ENCODE measurements at regions of chr1 and their contacts with region 1.

Region 1: DNA sequence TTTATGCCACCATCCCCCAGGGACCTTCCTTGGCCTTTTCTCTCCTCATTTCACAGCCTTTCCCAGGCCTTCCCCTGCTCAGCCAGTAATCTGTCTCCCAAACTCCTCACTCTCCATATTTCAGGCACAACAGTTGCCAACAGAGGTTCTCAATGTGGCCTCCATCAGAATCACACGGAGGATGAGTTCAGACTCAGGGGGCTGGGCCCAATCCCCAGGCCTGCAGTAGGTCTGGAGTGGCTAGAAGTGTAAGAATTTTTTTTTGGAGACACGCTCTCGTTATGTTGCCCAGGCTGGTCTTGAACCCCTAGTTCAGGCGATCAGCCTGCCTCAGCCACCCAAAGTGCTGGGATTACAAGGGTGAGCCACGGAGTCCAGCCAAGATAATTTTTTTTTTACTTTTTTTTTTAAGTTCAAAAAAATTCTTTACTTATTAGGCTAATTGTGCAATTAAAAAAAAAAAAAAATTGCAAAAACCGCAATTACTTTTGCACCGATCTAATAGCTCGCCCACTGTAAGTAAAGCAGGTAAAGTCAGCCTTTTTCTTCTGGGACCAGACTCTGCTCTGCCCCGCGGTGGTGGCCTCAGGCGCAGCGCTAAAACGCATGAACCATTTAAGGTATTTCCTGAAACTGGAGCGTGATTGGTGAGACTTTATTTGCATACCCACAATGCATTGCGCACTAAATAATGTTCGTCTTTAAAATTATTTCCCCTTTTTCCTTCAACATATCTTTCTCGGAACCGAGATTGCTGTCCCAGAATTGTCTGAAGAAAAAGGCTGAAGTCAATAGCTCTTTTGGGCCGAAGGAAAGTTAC is 18.7 kb downstream of the KIAA2013 start:
- DNase-seq: peak; percentile 98
- H3K4me3 Mint-ChIP-seq: peak overlapping the region; percentile 88
- H3K27ac Mint-ChIP-seq: peak overlapping the region; percentile 100
- H3K4me1 Mint-ChIP-seq: peaks cover 38% of the 10 kb centered on the region
- H3K27me3 Mint-ChIP-seq: peaks cover 29% of the 10 kb centered on the region

Region 2: DNA sequence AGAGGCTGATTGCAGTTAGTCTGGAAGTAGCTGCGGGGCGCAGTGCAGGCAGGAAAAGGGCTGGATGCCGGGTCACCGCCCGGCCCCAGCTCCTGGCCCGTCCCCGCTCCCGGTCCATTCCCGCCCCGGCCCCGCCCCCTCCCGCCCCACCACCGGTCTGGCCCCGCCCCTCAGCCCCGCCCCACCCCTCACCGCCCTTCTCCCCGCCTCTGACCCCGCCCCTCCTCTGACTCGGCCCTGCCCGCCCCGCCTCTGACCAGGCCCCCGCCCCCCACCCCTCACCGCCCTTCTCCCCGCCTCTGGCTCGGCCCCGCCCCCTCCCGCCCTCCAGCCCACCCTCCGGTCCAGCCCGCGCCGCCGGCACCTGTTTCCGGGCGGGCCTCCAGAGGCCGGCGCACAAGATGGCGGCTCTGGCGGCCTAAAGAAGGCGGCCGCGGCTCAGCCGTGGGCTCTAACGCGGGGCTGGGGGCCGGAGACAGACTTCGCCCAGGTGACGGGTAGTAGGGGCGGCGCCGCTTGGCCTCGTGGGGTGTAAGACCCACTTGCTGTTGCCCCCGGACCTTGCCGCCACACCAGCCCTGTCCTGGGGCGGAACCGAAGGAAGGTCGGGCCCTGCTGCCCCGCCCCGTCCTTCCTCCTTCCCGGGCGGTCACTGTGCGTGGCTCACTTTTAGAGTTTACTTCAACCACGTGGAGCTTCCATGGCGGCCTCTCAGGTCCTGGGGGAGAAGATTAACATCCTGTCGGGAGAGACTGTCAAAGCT is 634.5 kb before region 1 on chr1 and contains the start of gene UBIAD1:
- intact Hi-C with region 1: loop called (anchors 10 kb)
- DNase-seq: peak; percentile 93
- H3K4me3 Mint-ChIP-seq: peak within 1 kb of the TSS; percentile 91
- H3K27ac Mint-ChIP-seq: peak within 1 kb of the TSS; percentile 89
- H3K4me1 Mint-ChIP-seq: peaks cover 24% of the 10 kb centered on the region
- H3K27me3 Mint-ChIP-seq: peaks cover 2% of the 10 kb centered on the region
- total RNA-seq, gene UBIAD1: 32.4 and 32.5 TPM in 2 replicates

Region 3: DNA sequence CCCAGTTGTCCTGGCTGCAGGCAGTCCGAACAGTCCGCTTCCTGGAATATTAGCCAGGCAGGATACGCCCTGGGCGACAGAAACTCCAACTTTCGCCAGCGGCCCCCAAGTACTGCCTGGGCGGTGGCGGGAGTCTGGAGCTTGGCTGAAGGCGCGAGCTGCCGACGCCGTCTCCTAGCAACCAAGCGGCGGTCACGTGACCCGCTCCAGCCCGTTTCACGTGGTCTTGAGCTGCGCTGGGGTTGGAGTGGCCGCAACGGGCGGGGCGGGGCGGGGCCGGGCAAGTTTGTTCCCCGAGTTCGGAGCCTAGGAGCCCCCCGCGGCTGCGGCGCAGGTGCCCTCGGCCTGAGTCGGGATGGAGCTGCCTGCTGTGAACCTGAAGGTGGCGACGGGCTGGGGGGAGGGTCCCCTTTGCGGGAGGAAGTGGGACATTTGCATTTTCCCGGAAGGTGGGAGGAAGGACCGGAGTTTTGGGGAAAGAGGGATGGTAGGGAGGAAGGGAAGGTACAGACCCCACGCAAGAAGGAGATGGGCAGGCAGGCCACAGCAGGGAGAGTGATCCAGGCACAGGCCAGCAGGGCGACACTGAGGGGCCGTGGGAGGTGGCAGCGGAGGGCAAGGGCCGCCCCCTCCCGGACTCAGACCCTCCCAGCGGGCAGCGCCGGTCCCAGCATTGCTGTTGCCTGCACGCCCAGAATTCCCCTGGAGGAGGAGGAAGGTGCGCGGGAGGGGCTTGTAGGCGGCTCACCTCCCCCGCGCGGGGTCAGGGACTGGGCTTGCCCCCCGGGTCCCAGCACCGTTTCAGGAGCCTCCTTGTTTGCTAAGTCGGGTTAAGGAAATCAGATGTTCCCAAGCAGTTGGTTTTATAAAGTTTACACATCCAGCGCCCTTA is 171.4 kb before region 1 on chr1 and contains the start of gene AGTRAP:
- intact Hi-C with region 1: loop called (anchors 5 kb)
- DNase-seq: peak; percentile 96
- H3K4me3 Mint-ChIP-seq: peak within 1 kb of the TSS; percentile 98
- H3K27ac Mint-ChIP-seq: peak within 1 kb of the TSS; percentile 93
- H3K4me1 Mint-ChIP-seq: peaks cover 54% of the 10 kb centered on the region
- H3K27me3 Mint-ChIP-seq: no peaks in the 10 kb centered on the region
- total RNA-seq, gene AGTRAP: 13.1 and 14.0 TPM in 2 replicates

Region 4: DNA sequence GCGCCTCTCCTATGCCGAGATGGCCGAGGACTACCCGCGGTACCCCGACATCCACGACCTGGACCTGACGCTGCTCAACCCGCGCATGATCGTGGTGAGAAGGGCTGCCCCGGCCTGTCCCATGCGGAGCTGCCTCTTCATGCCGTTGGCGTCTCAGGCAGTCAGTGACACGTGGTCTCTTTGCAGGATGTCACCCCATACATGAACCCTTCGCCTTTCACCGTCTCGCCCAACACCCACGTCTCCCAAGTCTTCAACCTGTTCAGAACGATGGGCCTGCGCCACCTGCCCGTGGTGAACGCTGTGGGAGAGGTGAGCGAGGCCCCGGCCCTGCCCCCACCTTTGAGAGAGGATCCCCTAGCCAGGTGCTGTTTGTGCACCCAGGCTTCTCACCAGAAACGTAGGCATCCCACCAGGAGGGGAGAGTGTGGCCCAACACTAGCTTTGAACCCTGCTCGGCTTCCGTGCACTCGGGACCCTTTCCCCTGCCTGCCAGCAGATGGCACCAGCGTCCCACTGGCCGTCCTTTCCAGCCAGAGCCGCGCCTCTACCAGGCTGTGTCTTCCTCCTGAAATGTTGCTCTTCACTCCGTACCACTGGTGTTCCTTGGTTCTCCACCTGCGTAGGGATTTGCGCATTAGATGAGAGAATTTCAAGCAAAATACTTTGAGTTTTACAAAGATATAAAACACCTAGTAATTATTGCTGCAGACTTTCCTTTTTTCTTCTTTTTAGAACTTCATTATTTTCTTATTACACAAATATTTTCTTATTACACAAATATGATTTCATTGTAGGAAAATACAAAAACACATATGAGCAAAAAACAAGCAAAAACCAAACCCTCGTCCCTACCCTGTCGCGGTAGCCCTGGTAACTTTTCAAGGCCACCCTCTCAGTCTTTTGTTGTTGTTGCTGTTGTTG is 68.9 kb before region 1 on chr1:
- intact Hi-C with region 1: loop called (anchors 1 kb)
- DNase-seq: peak; percentile 93
- H3K4me3 Mint-ChIP-seq: no peak overlapping the region
- H3K27ac Mint-ChIP-seq: no peak overlapping the region
- H3K4me1 Mint-ChIP-seq: peaks cover 5% of the 10 kb centered on the region
- H3K27me3 Mint-ChIP-seq: no peaks in the 10 kb centered on the region

Region 5: GRCh38 chr1:11934302-11935056 is 27.0 kb after region 1 on chr1 and contains the start of gene PLOD1:
- intact Hi-C with region 1: loop called (anchors 2 kb)
- DNase-seq: peak; percentile 94
- H3K4me3 Mint-ChIP-seq: peak within 1 kb of the TSS; percentile 86
- H3K27ac Mint-ChIP-seq: peak within 1 kb of the TSS; percentile 50
- H3K4me1 Mint-ChIP-seq: peaks cover 8% of the 10 kb centered on the region
- H3K27me3 Mint-ChIP-seq: no peaks in the 10 kb centered on the region
- total RNA-seq, gene PLOD1: 40.3 and 40.6 TPM in 2 replicates

Region 6: DNA sequence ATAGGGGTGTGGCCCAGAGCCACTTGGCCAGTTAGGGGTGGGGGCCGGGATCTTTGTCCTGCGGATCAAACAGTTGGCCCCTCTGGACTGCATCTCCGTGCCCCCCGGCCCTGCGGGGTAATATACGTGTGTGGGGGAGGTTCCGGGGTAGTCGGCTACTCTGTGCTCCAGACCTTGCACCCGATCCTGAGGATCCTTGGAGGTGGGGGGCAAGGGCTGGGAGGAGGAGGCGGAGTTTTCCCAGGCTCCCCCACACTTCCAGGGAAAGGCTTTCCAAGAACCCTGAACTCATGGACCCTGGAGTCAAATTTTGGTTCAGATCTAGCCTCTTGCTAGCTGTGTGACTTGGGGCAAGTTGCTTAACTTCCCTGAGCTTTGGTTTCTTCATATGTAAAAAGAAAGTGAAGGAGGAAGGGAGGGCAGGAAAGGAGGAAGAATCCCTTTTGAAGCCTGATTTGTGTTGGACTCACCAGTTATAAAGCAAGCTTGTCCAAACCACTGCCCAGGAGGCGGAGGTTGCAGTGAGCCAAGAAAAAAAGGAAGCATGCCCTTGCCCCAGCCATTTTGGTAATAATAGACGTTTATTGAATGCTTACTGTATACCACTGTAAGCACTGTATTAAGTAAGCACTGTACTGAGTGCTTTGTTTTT is 112.5 kb after region 1 on chr1:
- intact Hi-C with region 1: loop called (anchors 1 kb)
- DNase-seq: no peak
- H3K4me3 Mint-ChIP-seq: peak overlapping the region; percentile 91
- H3K27ac Mint-ChIP-seq: peak overlapping the region; percentile 72
- H3K4me1 Mint-ChIP-seq: peaks cover 16% of the 10 kb centered on the region
- H3K27me3 Mint-ChIP-seq: peaks cover 2% of the 10 kb centered on the region

Region 7: DNA sequence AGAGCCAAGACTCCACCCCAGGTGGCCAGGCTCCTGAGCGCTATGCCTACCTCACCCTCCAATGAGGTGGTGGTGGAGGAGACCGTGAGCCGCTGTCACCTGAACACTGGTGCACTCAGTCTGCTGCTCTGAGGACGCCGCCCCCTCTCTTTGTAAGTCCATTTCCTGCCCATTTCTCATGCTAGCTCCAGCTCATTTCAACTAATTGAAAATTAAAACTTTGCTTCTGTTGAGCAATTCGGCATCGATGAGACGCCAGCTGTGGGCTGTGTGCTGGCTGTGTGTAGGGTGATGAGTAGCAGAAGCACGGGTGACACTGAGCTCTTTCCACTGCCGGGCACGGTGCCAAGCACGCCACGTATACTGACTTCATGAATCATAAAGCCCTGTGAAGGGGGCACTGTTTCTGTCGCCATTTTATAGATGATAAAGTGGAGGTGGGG is 270.5 kb after region 1 on chr1:
- intact Hi-C with region 1: loop called (anchors 5 kb)
- DNase-seq: peak; percentile 89
- H3K4me3 Mint-ChIP-seq: peak overlapping the region; percentile 80
- H3K27ac Mint-ChIP-seq: peak overlapping the region; percentile 88
- H3K4me1 Mint-ChIP-seq: peaks cover 80% of the 10 kb centered on the region
- H3K27me3 Mint-ChIP-seq: no peaks in the 10 kb centered on the region

Measured in activated CD4-positive, alpha-beta T cell treated with anti-CD3 and anti-CD28 coated beads, Interleukin-2, amount 10 ng/mL, durations not matched to agents 24 days and 14 days (primary cell).